H1 (cell line): ENCODE measurements at regions of chr1 and their contacts with region 1.

Region 1: DNA sequence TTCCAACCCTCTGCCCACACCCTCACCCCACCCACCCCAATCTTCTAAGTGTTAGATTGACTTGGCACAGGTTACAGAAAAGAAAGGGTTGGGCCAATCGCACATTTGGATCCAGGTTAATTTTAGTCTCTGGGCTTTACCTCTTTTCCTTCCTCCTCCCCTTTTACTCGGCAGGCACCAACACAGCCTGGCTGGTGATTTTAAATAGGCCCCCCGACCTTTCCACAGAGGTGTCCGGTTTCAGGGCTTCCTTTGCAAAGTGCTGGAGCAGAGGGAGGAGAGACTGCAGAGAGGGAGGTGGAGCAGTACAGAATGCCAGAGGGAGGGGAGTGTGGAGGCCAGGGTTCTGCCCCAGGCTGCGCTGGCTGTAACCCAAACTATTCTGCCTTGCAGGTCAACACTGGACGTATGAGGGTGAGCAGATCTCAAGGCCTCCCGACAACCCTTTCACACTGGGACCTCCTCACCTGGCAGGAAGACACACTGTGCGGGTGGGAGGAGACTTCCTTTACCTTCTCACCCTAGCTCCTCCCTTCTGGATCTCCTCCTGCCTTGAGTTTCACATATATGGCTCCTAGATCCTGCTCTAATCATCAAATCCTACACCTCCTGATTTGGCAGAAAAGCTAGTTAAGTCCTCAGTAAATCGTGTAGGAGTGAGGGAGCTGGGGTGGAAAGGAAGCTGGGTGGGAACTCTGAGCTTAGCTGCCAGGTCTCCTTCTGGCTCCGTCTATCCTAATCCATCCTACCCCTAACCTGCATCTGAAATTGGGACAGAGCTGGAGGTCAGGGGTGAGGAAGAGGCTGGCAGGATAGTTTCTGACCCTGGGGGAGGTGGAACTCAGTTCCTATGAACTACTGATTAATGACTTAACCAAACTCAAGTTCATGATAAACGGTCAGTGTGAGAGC is 2.4 kb downstream of the CA14 start:
- DNase-seq: peak in 1 of 2 experiments; percentile 81
- H3K4me3 ChIP-seq: peak overlapping the region; percentile 70 to 82 (median 80)
- H3K27ac ChIP-seq: peak overlapping the region; percentile 68; the same call in 1 of the 2 replicates
- H3K4me1 ChIP-seq: peaks cover 0 to 20% (median 14%) of the 10 kb centered on the region in 4 experiments; a peak in 6 of 7 replicates
- H3K27me3 ChIP-seq: no peaks in the 10 kb centered on the region
- CTCF ChIP-seq: no peak
- EP300 ChIP-seq: no peak
- POLR2A ChIP-seq: peak in 1 of 2 experiments; percentile 69; a peak in 1 of 3 replicates
- RAD21 ChIP-seq: no peak

Region 2: GRCh38 chr1:149896575-149896974 is 363.4 kb before region 1 on chr1:
- CTCF ChIA-PET with region 1: no interaction called
- POLR2A ChIA-PET with region 1: no interaction called
- DNase-seq: no peak
- H3K4me3 ChIP-seq: no peak overlapping the region
- H3K27ac ChIP-seq: no peak overlapping the region
- H3K4me1 ChIP-seq: peaks cover 0 to 5% (median 4%) of the 10 kb centered on the region in 4 experiments; a peak in 5 of 7 replicates
- H3K27me3 ChIP-seq: no peaks in the 10 kb centered on the region
- CTCF ChIP-seq: no peak
- EP300 ChIP-seq: no peak
- POLR2A ChIP-seq: no peak
- RAD21 ChIP-seq: no peak

Region 3: DNA sequence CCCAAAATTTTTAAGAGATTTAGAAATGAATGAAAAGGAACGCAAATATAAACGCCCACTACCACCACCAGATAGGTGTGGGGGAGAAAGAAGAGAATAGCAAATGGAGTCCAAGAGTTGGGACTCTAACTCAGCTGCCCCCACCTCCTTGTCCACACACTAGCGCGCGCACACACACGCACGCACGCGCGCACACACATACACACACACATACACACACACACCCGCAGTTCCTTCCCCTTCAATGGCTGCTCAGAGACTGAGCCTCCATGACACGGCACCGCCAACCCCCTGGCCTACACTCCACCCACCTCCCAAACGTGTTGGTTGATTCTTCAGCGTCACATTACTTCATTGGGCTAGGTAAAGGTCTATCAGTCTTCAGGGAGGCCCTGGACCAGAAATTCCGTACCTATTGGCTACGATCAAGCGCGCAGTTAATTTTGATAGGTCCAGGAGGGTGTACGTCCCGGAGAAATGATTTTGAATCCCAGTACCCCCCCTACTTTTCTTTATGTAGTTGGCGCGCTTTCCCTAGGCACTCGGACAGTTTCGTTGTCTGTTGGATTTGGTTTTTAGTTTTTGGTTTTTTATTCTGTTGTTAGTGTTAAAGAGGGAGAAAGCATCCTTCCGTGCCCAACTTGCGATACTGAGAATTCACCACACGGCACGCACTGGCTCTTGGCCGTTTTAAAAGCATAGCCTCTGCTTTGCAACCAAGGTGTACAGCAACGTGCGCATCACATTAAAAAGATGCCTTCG is 24.0 kb before region 1 on chr1 and contains the start of gene ANP32E:
- CTCF ChIA-PET with region 1: interaction called, 7 read pairs
- POLR2A ChIA-PET with region 1: interaction called, 61 read pairs
- DNase-seq: peak; percentile 88 to 94
- H3K4me3 ChIP-seq: peak within 1 kb of the TSS; percentile 84 to 99 (median 98)
- H3K27ac ChIP-seq: peak within 1 kb of the TSS; percentile 97
- H3K4me1 ChIP-seq: peaks cover 0 to 6% (median 2%) of the 10 kb centered on the region in 4 experiments; a peak in 5 of 7 replicates
- H3K27me3 ChIP-seq: no peaks in the 10 kb centered on the region
- CTCF ChIP-seq: no peak
- EP300 ChIP-seq: no peak
- POLR2A ChIP-seq: peak; percentile 83 to 91
- RAD21 ChIP-seq: peak in 1 of 2 experiments; percentile 24; a peak in 1 of 4 replicates
- total RNA-seq, gene ANP32E: 114 and 123 TPM in 2 replicates

Region 4: GRCh38 chr1:150243003-150243402 is 17.0 kb before region 1 on chr1:
- CTCF ChIA-PET with region 1: interaction called, 7 read pairs
- POLR2A ChIA-PET with region 1: interaction called, 24 read pairs
- DNase-seq: no peak
- H3K4me3 ChIP-seq: no peak overlapping the region
- H3K27ac ChIP-seq: no peak overlapping the region
- H3K4me1 ChIP-seq: no peaks in the 10 kb centered on the region
- H3K27me3 ChIP-seq: no peaks in the 10 kb centered on the region
- CTCF ChIP-seq: no peak
- EP300 ChIP-seq: no peak
- POLR2A ChIP-seq: no peak
- RAD21 ChIP-seq: no peak

Region 5: GRCh38 chr1:150293433-150294168 is 33.6 kb after region 1 on chr1 and contains the start of gene MRPS21:
- CTCF ChIA-PET with region 1: interaction called, 14 read pairs
- POLR2A ChIA-PET with region 1: interaction called, 535 read pairs
- DNase-seq: peak; percentile 70 to 88
- H3K4me3 ChIP-seq: peak within 1 kb of the TSS; percentile 79 to 100 (median 90)
- H3K27ac ChIP-seq: peak within 1 kb of the TSS; percentile 90
- H3K4me1 ChIP-seq: no peaks in the 10 kb centered on the region; a peak in 2 of 7 replicates
- H3K27me3 ChIP-seq: no peaks in the 10 kb centered on the region
- CTCF ChIP-seq: no peak
- EP300 ChIP-seq: no peak; a peak in 1 of 3 replicates
- POLR2A ChIP-seq: peak; percentile 92 to 99
- RAD21 ChIP-seq: no peak
- total RNA-seq, gene MRPS21: 99.8 and 104 TPM in 2 replicates

Region 6: GRCh38 chr1:150309770-150310508 is 49.9 kb after region 1 on chr1:
- CTCF ChIA-PET with region 1: interaction called, 6 read pairs
- POLR2A ChIA-PET with region 1: interaction called, 12 read pairs
- DNase-seq: no peak
- H3K4me3 ChIP-seq: no peak overlapping the region
- H3K27ac ChIP-seq: no peak overlapping the region
- H3K4me1 ChIP-seq: no peaks in the 10 kb centered on the region
- H3K27me3 ChIP-seq: no peaks in the 10 kb centered on the region
- CTCF ChIP-seq: no peak
- EP300 ChIP-seq: no peak
- POLR2A ChIP-seq: no peak
- RAD21 ChIP-seq: no peak

Region 7: GRCh38 chr1:150363426-150364230 is 103.6 kb after region 1 on chr1 and contains the start of gene RPRD2:
- CTCF ChIA-PET with region 1: interaction called, 3 read pairs
- POLR2A ChIA-PET with region 1: interaction called, 13 read pairs
- DNase-seq: peak; percentile 95 to 96
- H3K4me3 ChIP-seq: peak within 1 kb of the TSS; percentile 73 to 96 (median 92)
- H3K27ac ChIP-seq: peak within 1 kb of the TSS; percentile 98
- H3K4me1 ChIP-seq: peaks cover 2 to 5% (median 4%) of the 10 kb centered on the region in 4 experiments; a peak in 5 of 7 replicates
- H3K27me3 ChIP-seq: no peaks in the 10 kb centered on the region
- CTCF ChIP-seq: 0 out of 4 replicates have a peak, but pooled peaks of 1 of the 3 experiments have one; percentile 2
- EP300 ChIP-seq: no peak
- POLR2A ChIP-seq: peak; percentile 58 to 94
- RAD21 ChIP-seq: no peak
- total RNA-seq, gene RPRD2: 30.2 and 32.4 TPM in 2 replicates